ENCODE measurements at regions of chr18 and their contacts with region 1.

Region 1: GRCh38 chr18:46281185-46282176 is 177.3 kb downstream of the HAUS1 start:
- DNase-seq: peak; percentile 81
- H3K4me3 Mint-ChIP-seq: no peak overlapping the region
- H3K27ac Mint-ChIP-seq: no peak overlapping the region
- H3K4me1 Mint-ChIP-seq: peaks cover 25% of the 10 kb centered on the region
- H3K27me3 Mint-ChIP-seq: no peaks in the 10 kb centered on the region
- CTCF ChIP-seq: peak; percentile 89

Region 2: DNA sequence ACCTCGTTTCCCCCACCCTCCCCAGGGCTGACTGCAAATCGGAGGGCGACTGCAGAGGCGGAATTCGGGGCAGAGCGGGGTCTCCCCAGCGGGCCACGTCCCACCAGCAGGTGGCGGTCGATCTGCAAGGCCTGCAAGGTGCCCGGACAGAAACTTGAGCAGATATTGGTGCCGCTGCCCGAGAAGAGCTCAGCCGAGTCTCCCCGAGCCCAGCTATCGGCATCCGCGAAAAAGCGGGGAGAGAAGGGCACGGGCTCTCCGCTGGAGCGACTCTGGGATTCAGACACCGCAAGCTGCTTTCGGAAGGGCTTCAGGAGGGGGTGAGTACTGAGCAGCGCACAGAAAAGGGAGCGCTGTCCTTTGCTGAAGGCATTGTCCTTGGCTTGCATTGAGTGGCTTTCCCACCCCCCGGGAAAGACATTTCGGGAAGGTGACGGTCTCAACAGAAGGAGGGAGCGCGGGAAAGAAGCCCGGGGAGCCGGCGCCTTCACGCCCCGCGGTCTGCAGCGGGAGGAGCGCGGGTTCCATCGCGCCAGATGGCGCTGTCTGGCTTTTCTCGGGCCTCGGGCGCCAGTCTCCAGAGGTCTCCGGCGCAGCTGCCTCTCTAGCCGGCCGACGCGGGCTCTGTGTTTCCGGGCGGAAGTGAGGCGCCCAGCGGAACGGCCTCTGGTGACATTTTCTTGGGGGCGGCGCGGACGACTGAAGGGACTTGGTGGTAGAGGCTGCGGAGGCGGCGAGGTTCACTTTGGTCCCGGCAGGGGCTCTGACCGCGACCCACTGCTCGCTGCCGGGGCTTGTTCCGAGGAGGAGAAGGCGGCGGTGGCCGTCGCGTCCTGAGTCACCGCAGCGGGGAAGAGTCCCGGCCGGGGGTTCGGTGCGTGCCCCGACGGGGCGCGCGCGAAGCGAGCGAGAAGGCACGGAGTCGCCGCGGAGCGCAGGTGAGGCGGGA is 107.8 kb before region 1 on chr18:
- CTCF ChIA-PET with region 1: interaction called, 25 read pairs
- POLR2A ChIA-PET with region 1: interaction called, 5 read pairs
- intact Hi-C with region 1: loop called (anchors 5 kb)
- DNase-seq: peak; percentile 92
- H3K4me3 Mint-ChIP-seq: peak overlapping the region; percentile 84
- H3K27ac Mint-ChIP-seq: peak overlapping the region; percentile 94
- H3K4me1 Mint-ChIP-seq: peaks cover 6% of the 10 kb centered on the region
- H3K27me3 Mint-ChIP-seq: no peaks in the 10 kb centered on the region
- CTCF ChIP-seq: peak; percentile 89

Region 3: DNA sequence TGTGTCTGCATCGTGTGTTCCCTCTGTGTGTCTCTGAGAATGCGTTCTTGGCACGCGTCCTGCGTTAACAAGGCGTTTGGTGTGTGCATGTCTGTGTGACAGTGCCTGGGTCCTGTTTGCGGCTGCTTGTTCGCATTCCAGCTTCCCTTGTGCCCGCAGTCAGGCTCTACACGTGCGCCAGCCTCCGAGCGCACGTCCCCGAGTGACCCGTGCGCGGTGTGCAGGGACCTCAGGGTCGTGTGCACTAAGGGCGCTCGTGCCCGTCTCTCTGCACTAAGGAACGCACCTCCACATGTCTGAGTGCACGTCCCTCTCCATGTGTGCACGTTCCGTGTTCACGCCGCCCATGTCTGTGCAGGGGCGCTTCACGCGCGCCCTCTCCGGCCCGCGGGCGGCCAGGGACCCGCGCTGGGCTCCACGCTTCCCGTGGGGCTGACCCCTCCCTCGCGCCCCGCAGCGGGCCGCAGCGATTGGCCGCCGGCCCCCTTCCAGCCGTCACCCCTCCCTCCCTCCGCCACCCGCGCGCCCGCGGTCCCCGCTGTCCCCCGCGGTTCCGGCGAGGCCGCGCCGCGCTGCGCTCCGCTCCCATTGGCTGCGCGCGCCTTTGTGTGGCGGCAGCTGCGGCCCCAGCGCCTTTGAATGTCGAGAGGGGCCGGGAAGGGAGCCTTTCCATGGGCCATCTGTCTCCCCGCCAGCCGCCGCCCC is 52.1 kb after region 1 on chr18:
- CTCF ChIA-PET with region 1: interaction called, 12 read pairs
- POLR2A ChIA-PET with region 1: interaction called, 4 read pairs
- intact Hi-C with region 1: loop called (anchors 1 kb)
- DNase-seq: no peak
- H3K4me3 Mint-ChIP-seq: peak overlapping the region; percentile 92
- H3K27ac Mint-ChIP-seq: no peak overlapping the region
- H3K4me1 Mint-ChIP-seq: peaks cover 29% of the 10 kb centered on the region
- H3K27me3 Mint-ChIP-seq: no peaks in the 10 kb centered on the region
- CTCF ChIP-seq: no peak

Region 4: GRCh38 chr18:46481048-46481846 is 199.8 kb after region 1 on chr18:
- CTCF ChIA-PET with region 1: interaction called, 32 read pairs
- POLR2A ChIA-PET with region 1: interaction called, 3 read pairs
- intact Hi-C with region 1: loop called (anchors 1 kb)
- DNase-seq: peak; percentile 61
- H3K4me3 Mint-ChIP-seq: no peak overlapping the region
- H3K27ac Mint-ChIP-seq: no peak overlapping the region
- H3K4me1 Mint-ChIP-seq: peaks cover 7% of the 10 kb centered on the region
- H3K27me3 Mint-ChIP-seq: peaks cover 12% of the 10 kb centered on the region
- CTCF ChIP-seq: peak; percentile 54

Region 5: GRCh38 chr18:46536215-46536874 is 254.9 kb after region 1 on chr18:
- CTCF ChIA-PET with region 1: interaction called, 11 read pairs
- POLR2A ChIA-PET with region 1: no interaction called
- intact Hi-C with region 1: no loop called
- DNase-seq: peak; percentile 55
- H3K4me3 Mint-ChIP-seq: no peak overlapping the region
- H3K27ac Mint-ChIP-seq: no peak overlapping the region
- H3K4me1 Mint-ChIP-seq: peaks cover 11% of the 10 kb centered on the region
- H3K27me3 Mint-ChIP-seq: peaks cover 32% of the 10 kb centered on the region
- CTCF ChIP-seq: no peak

Region 6: GRCh38 chr18:46632401-46633071 is 351.1 kb after region 1 on chr18:
- CTCF ChIA-PET with region 1: interaction called, 181 read pairs
- POLR2A ChIA-PET with region 1: interaction called, 3 read pairs
- intact Hi-C with region 1: no loop called
- DNase-seq: peak; percentile 98
- H3K4me3 Mint-ChIP-seq: no peak overlapping the region
- H3K27ac Mint-ChIP-seq: peak overlapping the region; percentile 54
- H3K4me1 Mint-ChIP-seq: peaks cover 10% of the 10 kb centered on the region
- H3K27me3 Mint-ChIP-seq: no peaks in the 10 kb centered on the region
- CTCF ChIP-seq: no peak

Measured in MCF 10A (cell line).